ENCODE measurements at regions of chr7 and their contacts with region 1.

Region 1: DNA sequence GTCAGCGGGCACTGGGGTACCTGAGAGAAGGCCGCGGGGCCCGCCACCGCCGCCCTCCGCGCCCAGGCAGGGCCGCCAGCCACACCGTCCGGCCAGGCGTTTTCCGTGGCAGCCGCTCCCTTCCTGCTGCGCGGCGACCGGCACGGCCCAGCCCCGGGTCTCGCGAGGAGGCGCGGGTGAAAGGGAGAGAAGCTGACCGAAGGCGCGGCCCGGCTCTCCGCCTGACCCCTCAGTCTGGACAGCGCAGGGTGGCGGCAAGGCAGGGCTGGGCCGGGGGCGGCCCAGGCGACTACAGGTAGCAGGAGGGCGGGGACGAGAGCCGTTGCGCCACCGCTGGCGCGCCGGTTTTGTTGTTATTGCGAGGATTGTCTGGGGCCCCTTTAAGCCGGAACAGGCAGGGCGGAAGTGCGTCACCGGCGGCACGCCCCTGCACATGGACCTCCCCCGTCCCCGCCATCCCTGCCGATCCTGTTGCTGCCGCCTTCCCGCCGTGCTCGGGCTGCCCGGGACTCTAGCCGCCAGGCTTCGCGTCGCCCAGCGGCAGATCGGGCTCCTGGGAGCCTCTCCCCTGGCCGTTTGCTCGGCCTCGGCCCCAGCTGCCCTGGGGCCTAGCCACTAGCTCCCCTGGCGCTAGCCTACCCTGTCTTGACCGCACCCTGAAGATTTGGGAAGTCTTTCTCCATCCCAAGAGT is at the start of gene HERPUD2:
- DNase-seq: peak; percentile 92
- H3K4me3 Mint-ChIP-seq: peak within 1 kb of the TSS; percentile 94
- H3K27ac Mint-ChIP-seq: peak within 1 kb of the TSS; percentile 96
- H3K4me1 Mint-ChIP-seq: peaks cover 39% of the 10 kb centered on the region
- H3K27me3 Mint-ChIP-seq: no peaks in the 10 kb centered on the region
- total RNA-seq, gene HERPUD2: 48.0 to 49.8 TPM

Region 2: GRCh38 chr7:34991938-34992840 is 702.7 kb before region 1 on chr7:
- CTCF ChIA-PET with region 1: no interaction called
- POLR2A ChIA-PET with region 1: no interaction called
- DNase-seq: peak; percentile 69
- H3K4me3 Mint-ChIP-seq: peak overlapping the region; percentile 57
- H3K27ac Mint-ChIP-seq: peak overlapping the region; percentile 96
- H3K4me1 Mint-ChIP-seq: peaks cover 33% of the 10 kb centered on the region
- H3K27me3 Mint-ChIP-seq: no peaks in the 10 kb centered on the region

Region 3: DNA sequence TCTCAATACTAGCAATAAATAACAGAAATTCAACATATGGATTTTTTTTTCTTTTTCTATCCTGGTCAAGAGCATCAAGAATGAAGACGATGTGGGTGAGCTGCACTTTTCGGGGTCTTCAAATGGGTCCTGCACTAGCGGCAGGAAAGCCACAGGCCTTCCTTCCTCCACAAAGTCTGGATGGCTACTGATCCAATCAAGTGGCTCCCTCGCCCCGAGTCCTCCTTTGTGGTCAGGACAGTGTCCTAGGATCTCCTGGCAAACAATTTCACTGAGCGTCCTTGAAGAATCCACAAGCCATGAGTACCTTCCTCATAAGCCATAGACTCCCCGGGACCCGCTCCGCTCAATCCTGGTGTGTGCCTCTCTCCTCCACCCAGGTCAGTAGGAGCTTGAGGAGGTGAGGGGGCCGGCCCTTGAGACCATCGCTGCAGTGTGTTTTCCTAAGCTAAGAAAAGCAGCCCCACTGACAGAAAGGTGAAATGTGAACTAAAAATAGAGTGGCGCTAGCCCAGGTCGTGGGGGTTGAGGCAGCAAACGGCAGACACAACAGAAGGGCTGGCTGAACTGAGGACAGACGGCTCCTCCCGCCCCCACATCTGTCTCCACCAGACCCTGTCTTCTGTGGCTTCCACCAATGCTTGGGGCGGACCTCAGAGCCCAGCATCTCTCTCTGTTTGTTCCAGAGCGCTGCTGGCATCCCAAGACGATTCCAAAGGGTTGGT is 202.3 kb before region 1 on chr7:
- CTCF ChIA-PET with region 1: no interaction called
- POLR2A ChIA-PET with region 1: no interaction called
- DNase-seq: no peak
- H3K4me3 Mint-ChIP-seq: no peak overlapping the region
- H3K27ac Mint-ChIP-seq: no peak overlapping the region
- H3K4me1 Mint-ChIP-seq: peaks cover 5% of the 10 kb centered on the region
- H3K27me3 Mint-ChIP-seq: peaks cover 25% of the 10 kb centered on the region

Region 4: GRCh38 chr7:35565927-35566326 is 129.0 kb before region 1 on chr7:
- CTCF ChIA-PET with region 1: no interaction called
- POLR2A ChIA-PET with region 1: no interaction called
- DNase-seq: no peak
- H3K4me3 Mint-ChIP-seq: no peak overlapping the region
- H3K27ac Mint-ChIP-seq: no peak overlapping the region
- H3K4me1 Mint-ChIP-seq: no peaks in the 10 kb centered on the region
- H3K27me3 Mint-ChIP-seq: peaks cover 25% of the 10 kb centered on the region

Region 5: DNA sequence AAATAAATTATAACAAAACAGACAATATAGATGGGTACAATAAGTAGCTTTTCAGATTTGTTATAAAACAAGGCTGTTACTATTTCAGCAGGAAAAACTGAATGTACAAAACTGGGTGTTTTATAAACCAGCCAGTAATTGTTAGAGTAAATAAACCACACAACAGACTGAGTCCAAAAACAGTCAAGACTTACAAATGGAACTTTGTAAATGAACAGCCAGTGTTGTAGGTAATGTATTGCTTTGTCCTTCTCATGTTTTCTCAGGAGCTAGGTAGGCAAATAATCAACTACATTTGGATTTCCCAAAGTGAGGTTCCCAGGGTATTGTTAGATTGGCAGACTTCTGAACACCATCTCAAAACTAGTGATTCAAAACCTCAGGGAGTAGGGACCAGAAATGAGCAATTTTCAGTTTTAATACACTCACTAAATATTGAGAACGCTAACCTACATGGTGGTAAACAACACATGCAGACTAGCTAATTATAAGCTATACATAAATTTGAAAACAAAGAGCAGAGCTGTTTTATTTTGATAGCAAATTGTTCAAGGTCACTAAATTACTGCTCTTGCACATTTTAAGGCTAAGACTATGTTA is 36.2 kb before region 1 on chr7:
- CTCF ChIA-PET with region 1: interaction called, 3 read pairs
- POLR2A ChIA-PET with region 1: interaction called, 12 read pairs
- DNase-seq: no peak
- H3K4me3 Mint-ChIP-seq: no peak overlapping the region
- H3K27ac Mint-ChIP-seq: no peak overlapping the region
- H3K4me1 Mint-ChIP-seq: peaks cover 42% of the 10 kb centered on the region
- H3K27me3 Mint-ChIP-seq: no peaks in the 10 kb centered on the region

Region 6: GRCh38 chr7:35714862-35715261 is 19.9 kb after region 1 on chr7:
- CTCF ChIA-PET with region 1: interaction called, 5 read pairs
- POLR2A ChIA-PET with region 1: interaction called, 109 read pairs
- DNase-seq: no peak
- H3K4me3 Mint-ChIP-seq: no peak overlapping the region
- H3K27ac Mint-ChIP-seq: no peak overlapping the region
- H3K4me1 Mint-ChIP-seq: peaks cover 11% of the 10 kb centered on the region
- H3K27me3 Mint-ChIP-seq: peaks cover 7% of the 10 kb centered on the region

Region 7: GRCh38 chr7:35729061-35729783 is 34.3 kb after region 1 on chr7:
- CTCF ChIA-PET with region 1: interaction called, 37 read pairs
- POLR2A ChIA-PET with region 1: interaction called, 81 read pairs
- DNase-seq: peak; percentile 61
- H3K4me3 Mint-ChIP-seq: peak overlapping the region; percentile 1
- H3K27ac Mint-ChIP-seq: peak overlapping the region; percentile 69
- H3K4me1 Mint-ChIP-seq: peaks cover 61% of the 10 kb centered on the region
- H3K27me3 Mint-ChIP-seq: peaks cover 4% of the 10 kb centered on the region

Region 8: DNA sequence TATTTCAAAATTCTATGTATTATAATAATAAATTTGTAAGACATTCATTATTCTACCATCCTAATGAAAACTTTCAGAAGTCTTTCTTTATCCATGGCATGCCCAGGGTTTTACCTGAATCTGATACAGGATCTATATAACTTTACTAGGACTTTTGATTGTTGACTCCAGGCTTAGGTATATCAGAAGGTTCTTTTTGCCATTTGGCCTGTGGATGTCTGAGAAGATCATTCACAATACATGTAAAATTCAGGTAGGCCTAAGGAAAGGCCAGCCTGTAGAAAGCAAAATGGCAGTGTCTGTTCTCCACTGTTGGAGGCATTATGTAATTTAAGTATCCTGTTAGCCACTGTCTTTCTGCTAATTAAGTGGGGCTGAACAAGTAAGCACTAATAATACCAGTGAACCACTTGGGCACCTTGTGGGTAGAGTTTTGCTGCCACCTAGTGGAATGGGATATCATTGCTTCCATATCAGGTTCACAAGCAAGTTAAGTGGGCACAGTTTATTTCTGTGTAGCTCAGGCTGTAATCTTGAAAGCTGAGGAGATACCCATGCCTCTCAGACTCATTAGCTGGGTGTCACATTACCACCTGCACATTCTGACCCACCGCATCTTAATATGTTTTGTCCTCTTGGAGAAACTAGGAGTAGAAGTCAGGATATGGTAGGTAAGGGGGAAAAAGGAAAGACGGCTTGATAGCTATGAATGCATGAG is 211.4 kb after region 1 on chr7:
- CTCF ChIA-PET with region 1: interaction called, 10 read pairs
- POLR2A ChIA-PET with region 1: no interaction called
- DNase-seq: peak; percentile 72
- H3K4me3 Mint-ChIP-seq: no peak overlapping the region
- H3K27ac Mint-ChIP-seq: no peak overlapping the region
- H3K4me1 Mint-ChIP-seq: peaks cover 2% of the 10 kb centered on the region
- H3K27me3 Mint-ChIP-seq: no peaks in the 10 kb centered on the region

Measured in activated CD4-positive, alpha-beta memory T cell treated with anti-CD3 and anti-CD28 coated beads, Interleukin-2, amount 10 ng/mL, durations not matched to agents 7 days and 5 days (primary cell).